B cell (primary cell): ENCODE measurements at regions of chr11 and their contacts with region 1.

Region 1: GRCh38 chr11:3849297-3849874 is 6.1 kb upstream of the STIM1 start:
- DNase-seq: peak; percentile 80
- ATAC-seq: peak; percentile 64
- H3K4me3 ChIP-seq: no peak overlapping the region
- H3K4me3 Mint-ChIP-seq: no peak overlapping the region
- H3K27ac ChIP-seq: no peak overlapping the region
- H3K27ac Mint-ChIP-seq: no peak overlapping the region
- H3K4me1 ChIP-seq: peaks cover 24% of the 10 kb centered on the region in 2 donors
- H3K4me1 Mint-ChIP-seq: peaks cover 23% of the 10 kb centered on the region
- H3K27me3 ChIP-seq: no peaks in the 10 kb centered on the region
- H3K27me3 Mint-ChIP-seq: no peaks in the 10 kb centered on the region
- CTCF ChIP-seq: peak; percentile 83

Region 2: DNA sequence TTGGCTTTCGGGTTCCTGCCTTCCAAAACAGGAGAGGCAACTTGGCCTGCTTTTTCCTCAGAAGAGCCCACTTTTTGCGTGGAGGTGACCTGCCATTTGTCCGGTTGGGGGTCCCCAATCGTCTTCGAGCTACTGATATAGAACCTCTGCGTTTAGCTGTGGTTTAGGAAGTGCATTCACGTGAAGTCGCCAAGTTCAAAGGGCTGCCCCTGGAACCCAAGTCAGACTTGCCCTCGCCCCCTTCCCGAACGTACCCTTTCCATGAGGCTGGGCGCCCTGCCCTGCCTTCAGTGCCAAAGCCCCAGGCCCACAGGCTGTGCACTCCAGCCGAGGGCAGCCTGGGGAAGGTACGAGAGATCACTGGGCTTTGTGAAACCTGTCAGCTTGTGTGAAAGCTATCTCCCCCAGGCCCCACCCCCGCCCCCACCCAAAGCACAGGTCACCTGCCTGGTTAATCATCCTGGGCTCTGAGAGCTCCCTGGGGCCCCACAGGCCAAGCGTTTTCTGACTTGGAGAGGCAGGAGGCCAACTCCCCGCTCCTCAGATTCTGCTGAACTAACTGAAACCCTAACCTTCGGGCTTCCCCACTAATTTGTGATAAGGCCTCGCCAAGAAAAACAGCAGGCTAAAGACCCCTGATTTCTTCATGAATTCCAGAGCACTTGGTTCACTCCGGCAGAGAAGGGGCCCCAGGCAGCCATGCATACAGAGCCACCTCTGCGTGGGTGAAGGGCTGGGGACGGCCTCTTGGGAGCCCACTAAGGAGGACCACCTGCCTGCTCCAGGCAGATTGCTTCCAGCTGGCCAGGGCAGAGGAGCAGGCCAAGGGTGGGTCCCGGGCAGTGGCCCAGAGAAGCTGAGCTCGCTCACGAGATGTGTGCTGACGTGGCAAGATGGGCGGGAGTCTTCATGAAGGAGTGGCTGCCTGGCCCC is 1123.8 kb before region 1 on chr11:
- CTCF ChIA-PET with region 1: no interaction called
- POLR2A ChIA-PET with region 1: no interaction called
- intact Hi-C with region 1: no loop called
- DNase-seq: no peak
- ATAC-seq: no peak
- H3K4me3 ChIP-seq: no peak overlapping the region
- H3K4me3 Mint-ChIP-seq: no peak overlapping the region
- H3K27ac ChIP-seq: no peak overlapping the region
- H3K27ac Mint-ChIP-seq: no peak overlapping the region
- H3K4me1 ChIP-seq: no peaks in the 10 kb centered on the region
- H3K4me1 Mint-ChIP-seq: no peaks in the 10 kb centered on the region
- H3K27me3 ChIP-seq: no peaks in the 10 kb centered on the region
- H3K27me3 Mint-ChIP-seq: no peaks in the 10 kb centered on the region
- CTCF ChIP-seq: no peak

Region 3: DNA sequence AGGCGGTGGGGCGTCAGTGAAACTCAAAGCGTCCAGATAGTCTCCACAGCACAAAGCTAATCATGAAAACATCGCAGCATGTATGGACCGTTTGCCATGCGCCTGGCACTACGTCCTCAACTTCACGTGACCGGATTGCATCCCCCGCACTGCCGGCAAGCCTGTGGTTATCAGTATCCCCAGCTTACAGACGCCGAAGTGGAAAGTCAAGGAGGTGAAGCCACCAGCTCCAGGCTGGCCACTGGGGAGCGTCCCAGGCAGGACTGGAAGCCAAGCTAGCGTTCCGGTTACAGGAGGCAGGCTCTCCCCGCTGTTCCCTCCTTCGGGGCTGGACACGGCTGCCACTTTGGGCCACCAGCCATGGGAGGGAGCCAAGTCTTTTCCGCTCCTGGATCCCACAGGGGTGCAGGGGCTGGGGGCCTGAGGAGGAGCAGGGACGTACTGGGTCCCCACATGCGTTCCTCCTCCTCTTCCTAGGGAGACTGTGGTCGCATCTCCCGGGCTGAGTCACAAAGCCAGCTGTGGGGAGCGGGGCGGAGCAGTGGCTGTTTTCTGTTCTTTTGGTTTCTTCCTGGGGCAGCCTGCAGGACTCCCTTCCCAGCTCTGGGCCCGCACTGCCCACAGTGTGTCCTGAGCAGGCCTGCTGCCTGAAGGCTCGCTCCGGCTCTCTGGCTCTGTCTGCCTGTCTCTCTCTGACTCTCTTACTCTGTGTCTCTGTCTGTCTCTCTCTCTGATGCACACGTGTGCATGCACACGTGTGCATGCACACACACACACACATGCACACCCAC is 679.9 kb before region 1 on chr11:
- CTCF ChIA-PET with region 1: no interaction called
- POLR2A ChIA-PET with region 1: no interaction called
- intact Hi-C with region 1: no loop called
- DNase-seq: no peak
- ATAC-seq: no peak
- H3K4me3 ChIP-seq: no peak overlapping the region
- H3K4me3 Mint-ChIP-seq: no peak overlapping the region
- H3K27ac ChIP-seq: no peak overlapping the region
- H3K27ac Mint-ChIP-seq: no peak overlapping the region
- H3K4me1 ChIP-seq: peaks cover 0 to 7% of the 10 kb centered on the region in 2 donors
- H3K4me1 Mint-ChIP-seq: peaks cover 3% of the 10 kb centered on the region
- H3K27me3 ChIP-seq: peaks cover 0 to 23% (median 4%) of the 10 kb centered on the region in 4 experiments
- H3K27me3 Mint-ChIP-seq: peaks cover 27% of the 10 kb centered on the region
- CTCF ChIP-seq: no peak

Region 4: DNA sequence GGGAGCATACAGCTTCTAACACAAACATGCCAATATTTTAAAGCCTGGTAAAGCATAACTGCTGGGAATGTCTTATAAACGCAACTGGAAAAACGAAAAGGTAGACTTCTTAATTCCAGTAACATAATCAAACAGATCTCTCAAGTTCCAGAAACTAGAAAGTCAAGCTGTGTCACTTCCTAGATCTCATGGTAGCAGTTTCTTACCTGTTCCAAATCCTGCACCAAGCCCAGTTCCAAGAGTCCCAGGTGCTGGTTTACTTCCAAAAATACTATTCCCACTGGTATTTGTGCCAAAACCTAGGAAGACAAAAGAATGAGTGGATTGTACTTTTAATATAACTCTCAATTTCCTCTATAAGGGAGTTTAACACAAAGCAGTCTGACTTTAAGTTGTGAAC is 96.3 kb before region 1 on chr11:
- CTCF ChIA-PET with region 1: no interaction called
- POLR2A ChIA-PET with region 1: no interaction called
- intact Hi-C with region 1: no loop called
- DNase-seq: no peak
- ATAC-seq: no peak
- H3K4me3 ChIP-seq: no peak overlapping the region
- H3K4me3 Mint-ChIP-seq: no peak overlapping the region
- H3K27ac ChIP-seq: no peak overlapping the region
- H3K27ac Mint-ChIP-seq: no peak overlapping the region
- H3K4me1 ChIP-seq: no peaks in the 10 kb centered on the region
- H3K4me1 Mint-ChIP-seq: no peaks in the 10 kb centered on the region
- H3K27me3 ChIP-seq: no peaks in the 10 kb centered on the region
- H3K27me3 Mint-ChIP-seq: no peaks in the 10 kb centered on the region
- CTCF ChIP-seq: no peak

Region 5: DNA sequence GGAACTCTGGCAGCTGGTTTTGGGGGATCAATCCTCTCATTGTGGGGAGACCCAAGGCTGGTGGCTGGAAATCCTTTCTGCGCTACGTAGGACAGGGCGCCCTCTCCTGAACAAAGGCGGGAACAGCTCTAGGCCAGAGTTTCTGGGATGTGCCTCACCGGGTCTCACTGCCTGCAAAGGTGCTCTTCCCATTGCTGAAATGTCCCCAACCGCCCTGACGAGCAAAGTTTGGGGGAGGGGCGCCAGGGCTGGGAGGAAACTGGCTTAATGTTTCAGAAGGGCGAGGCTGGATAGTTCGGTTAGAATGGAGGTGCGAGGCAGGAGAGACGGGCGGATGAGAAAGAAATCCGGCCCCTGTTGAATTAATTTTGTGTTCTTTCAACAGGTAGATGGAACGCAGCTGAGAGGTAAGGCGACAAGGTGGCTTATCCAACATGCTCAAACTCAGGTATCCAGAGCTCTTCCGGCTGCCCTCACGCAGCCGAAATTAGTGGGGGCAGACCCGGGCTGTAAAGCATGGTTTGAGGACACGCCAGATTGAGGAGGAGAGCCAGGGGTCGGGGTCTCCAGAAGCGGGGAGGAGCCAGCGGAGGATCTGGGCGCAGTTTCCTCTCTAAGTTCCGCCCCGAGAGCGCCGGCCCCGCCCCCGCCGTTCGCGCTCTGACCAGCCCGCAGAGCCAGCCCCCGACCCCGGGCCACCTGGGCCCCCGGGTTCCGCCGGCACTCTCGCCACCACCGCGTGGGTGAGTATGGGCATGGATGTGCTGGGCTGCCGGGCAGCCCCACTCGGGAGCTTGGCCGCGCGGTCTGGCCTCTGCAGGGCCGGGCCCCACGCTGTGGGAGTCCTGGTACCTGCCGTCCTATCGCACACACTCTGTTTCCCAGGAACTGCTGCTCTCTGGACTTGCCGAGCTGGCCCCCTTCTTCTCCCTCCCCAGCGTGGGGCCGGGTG is 41.2 kb before region 1 on chr11 and contains the start of gene PGAP2:
- CTCF ChIA-PET with region 1: interaction called, 28 read pairs
- POLR2A ChIA-PET with region 1: no interaction called
- intact Hi-C with region 1: no loop called
- DNase-seq: peak; percentile 71
- ATAC-seq: peak; percentile 85
- H3K4me3 ChIP-seq: peak within 1 kb of the TSS; percentile 91 to 99 (median 96)
- H3K4me3 Mint-ChIP-seq: peak within 1 kb of the TSS; percentile 98
- H3K27ac ChIP-seq: peak within 1 kb of the TSS; percentile 59 to 60
- H3K27ac Mint-ChIP-seq: peak within 1 kb of the TSS; percentile 92
- H3K4me1 ChIP-seq: peaks cover 6 to 17% of the 10 kb centered on the region in 2 donors
- H3K4me1 Mint-ChIP-seq: peaks cover 11% of the 10 kb centered on the region
- H3K27me3 ChIP-seq: no peaks in the 10 kb centered on the region
- H3K27me3 Mint-ChIP-seq: no peaks in the 10 kb centered on the region
- CTCF ChIP-seq: peak; percentile 61
- total RNA-seq, gene PGAP2: 20.5 and 20.8 TPM in 2 replicates

Region 6: GRCh38 chr11:3905080-3905953 is 55.9 kb after region 1 on chr11:
- CTCF ChIA-PET with region 1: interaction called, 37 read pairs
- POLR2A ChIA-PET with region 1: interaction called, 17 read pairs
- intact Hi-C with region 1: no loop called
- DNase-seq: no peak
- ATAC-seq: peak; percentile 63
- H3K4me3 ChIP-seq: no peak overlapping the region
- H3K4me3 Mint-ChIP-seq: peak overlapping the region; percentile 49
- H3K27ac ChIP-seq: peak overlapping the region in 1 of 2 donors; percentile 46
- H3K27ac Mint-ChIP-seq: peak overlapping the region; percentile 37
- H3K4me1 ChIP-seq: peaks cover 61 to 66% of the 10 kb centered on the region in 2 donors
- H3K4me1 Mint-ChIP-seq: peaks cover 76% of the 10 kb centered on the region
- H3K27me3 ChIP-seq: no peaks in the 10 kb centered on the region
- H3K27me3 Mint-ChIP-seq: no peaks in the 10 kb centered on the region
- CTCF ChIP-seq: no peak

Region 7: GRCh38 chr11:3959015-3959919 is 109.9 kb after region 1 on chr11:
- CTCF ChIA-PET with region 1: interaction called, 46 read pairs
- POLR2A ChIA-PET with region 1: interaction called, 7 read pairs
- intact Hi-C with region 1: no loop called
- DNase-seq: peak; percentile 31
- ATAC-seq: no peak
- H3K4me3 ChIP-seq: no peak overlapping the region
- H3K4me3 Mint-ChIP-seq: no peak overlapping the region
- H3K27ac ChIP-seq: no peak overlapping the region
- H3K27ac Mint-ChIP-seq: no peak overlapping the region
- H3K4me1 ChIP-seq: peaks cover 13% of the 10 kb centered on the region in 2 donors
- H3K4me1 Mint-ChIP-seq: peaks cover 53% of the 10 kb centered on the region
- H3K27me3 ChIP-seq: no peaks in the 10 kb centered on the region
- H3K27me3 Mint-ChIP-seq: no peaks in the 10 kb centered on the region
- CTCF ChIP-seq: peak; percentile 14

Region 8: GRCh38 chr11:3984896-3985295 is 135.5 kb after region 1 on chr11:
- CTCF ChIA-PET with region 1: interaction called, 132 read pairs
- POLR2A ChIA-PET with region 1: interaction called, 11 read pairs
- intact Hi-C with region 1: loop called (anchors 1 kb)
- DNase-seq: peak; percentile 58
- ATAC-seq: peak; percentile 69
- H3K4me3 ChIP-seq: no peak overlapping the region
- H3K4me3 Mint-ChIP-seq: no peak overlapping the region
- H3K27ac ChIP-seq: no peak overlapping the region
- H3K27ac Mint-ChIP-seq: peak overlapping the region; percentile 51
- H3K4me1 ChIP-seq: peaks cover 23 to 27% of the 10 kb centered on the region in 2 donors
- H3K4me1 Mint-ChIP-seq: peaks cover 44% of the 10 kb centered on the region
- H3K27me3 ChIP-seq: no peaks in the 10 kb centered on the region
- H3K27me3 Mint-ChIP-seq: no peaks in the 10 kb centered on the region
- CTCF ChIP-seq: peak; percentile 48

Region 9: DNA sequence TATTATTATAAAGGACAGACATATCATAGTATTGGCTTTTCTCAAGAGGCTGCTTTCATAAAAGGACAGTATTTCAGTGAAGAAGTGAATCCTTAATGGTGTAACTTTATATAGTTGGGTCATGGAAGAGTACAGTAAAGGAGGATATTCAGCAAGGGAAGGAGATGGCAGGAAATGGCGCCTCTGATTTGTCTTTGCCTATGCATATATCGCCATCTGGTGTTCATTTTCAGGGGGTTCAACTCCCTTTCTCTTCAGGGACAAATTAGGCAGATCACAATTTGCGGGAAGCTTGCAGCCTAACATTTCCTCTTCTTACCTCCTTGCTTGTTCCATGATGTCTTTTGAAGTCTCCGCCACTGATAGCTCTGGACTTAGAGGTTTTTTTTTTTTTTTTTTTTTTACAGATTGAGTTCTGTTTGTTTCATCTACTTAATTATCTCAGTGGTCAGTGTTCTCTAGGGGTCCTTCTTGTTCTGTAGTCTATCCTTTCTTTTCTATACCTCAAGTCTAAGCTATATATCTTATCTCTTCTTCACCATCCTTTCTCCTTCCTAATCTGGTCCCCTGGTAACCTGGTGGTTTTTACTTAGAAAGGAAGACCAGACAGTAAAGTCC is 223.4 kb after region 1 on chr11:
- CTCF ChIA-PET with region 1: interaction called, 819 read pairs
- POLR2A ChIA-PET with region 1: interaction called, 12 read pairs
- intact Hi-C with region 1: loop called (anchors 1 kb)
- DNase-seq: peak; percentile 82
- ATAC-seq: peak; percentile 73
- H3K4me3 ChIP-seq: no peak overlapping the region
- H3K4me3 Mint-ChIP-seq: no peak overlapping the region
- H3K27ac ChIP-seq: peak overlapping the region in 1 of 2 donors; percentile 31
- H3K27ac Mint-ChIP-seq: peak overlapping the region; percentile 5
- H3K4me1 ChIP-seq: peaks cover 4 to 14% of the 10 kb centered on the region in 2 donors
- H3K4me1 Mint-ChIP-seq: peaks cover 20% of the 10 kb centered on the region
- H3K27me3 ChIP-seq: no peaks in the 10 kb centered on the region
- H3K27me3 Mint-ChIP-seq: no peaks in the 10 kb centered on the region
- CTCF ChIP-seq: peak; percentile 95

Region 10: DNA sequence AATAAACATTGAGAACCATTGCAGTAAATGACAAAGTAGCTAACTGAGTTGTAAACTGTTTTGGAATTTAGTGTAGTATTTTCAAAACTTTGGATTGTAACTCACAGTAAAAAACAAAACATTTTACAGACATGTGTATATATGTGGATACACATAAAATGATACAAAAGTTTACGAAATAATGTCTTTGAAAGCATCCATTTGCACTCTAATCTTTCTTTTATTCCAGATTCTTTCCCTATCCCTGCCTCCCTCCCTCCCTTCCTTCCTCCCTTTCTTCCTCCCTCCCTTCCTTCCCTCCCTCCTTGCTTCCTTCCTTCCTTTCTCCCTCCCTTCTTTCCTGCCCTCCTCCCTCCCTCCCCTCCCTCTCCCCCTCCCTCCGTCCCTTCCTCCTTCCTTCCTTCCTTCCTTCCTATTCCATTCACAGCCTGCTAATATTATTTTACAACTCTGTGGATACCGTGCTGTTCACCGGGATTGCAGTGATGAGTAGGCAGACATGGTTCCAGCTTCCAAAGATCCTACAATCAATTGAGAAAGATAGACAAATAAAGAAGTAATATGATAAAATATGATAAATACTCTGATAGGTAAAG is 248.7 kb after region 1 on chr11:
- CTCF ChIA-PET with region 1: no interaction called
- POLR2A ChIA-PET with region 1: no interaction called
- intact Hi-C with region 1: no loop called
- DNase-seq: no peak
- ATAC-seq: no peak
- H3K4me3 ChIP-seq: no peak overlapping the region
- H3K4me3 Mint-ChIP-seq: no peak overlapping the region
- H3K27ac ChIP-seq: no peak overlapping the region
- H3K27ac Mint-ChIP-seq: no peak overlapping the region
- H3K4me1 ChIP-seq: peaks cover 14 to 19% of the 10 kb centered on the region in 2 donors
- H3K4me1 Mint-ChIP-seq: peaks cover 39% of the 10 kb centered on the region
- H3K27me3 ChIP-seq: no peaks in the 10 kb centered on the region
- H3K27me3 Mint-ChIP-seq: no peaks in the 10 kb centered on the region
- CTCF ChIP-seq: no peak